PC-9 (cell line): ENCODE measurements at regions of chr5 and their contacts with region 1.

Region 1: GRCh38 chr5:149960272-149961185 is at the start of gene SLC26A2:
- DNase-seq: peak; percentile 93 to 99
- H3K4me3 ChIP-seq: peak within 1 kb of the TSS; percentile 75
- H3K27ac ChIP-seq: peak within 1 kb of the TSS; percentile 80
- H3K4me1 ChIP-seq: peaks cover 13% of the 10 kb centered on the region
- H3K27me3 ChIP-seq: no peaks in the 10 kb centered on the region
- CTCF ChIP-seq: no peak
- total RNA-seq, gene SLC26A2: 10.2 and 13.5 TPM in 2 replicates

Region 2: DNA sequence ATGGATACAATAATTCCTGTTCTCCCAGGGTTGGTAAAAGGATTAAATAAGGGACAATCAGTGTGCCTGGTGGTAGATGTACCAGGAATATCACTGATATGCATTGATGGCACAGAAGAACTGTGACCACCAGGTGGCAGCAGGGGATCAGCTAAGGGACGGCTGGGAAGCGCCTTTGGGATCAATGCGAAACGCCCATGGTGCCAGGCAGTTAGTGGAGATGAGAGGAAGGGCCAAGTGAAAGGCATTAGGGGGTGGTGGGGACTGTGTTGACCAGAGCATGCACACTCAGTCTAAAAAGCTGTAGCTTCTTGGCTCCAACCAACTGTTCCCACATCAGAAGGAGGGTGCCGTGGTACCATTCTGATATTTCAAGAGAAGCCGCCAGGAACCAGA is 323.7 kb before region 1 on chr5:
- CTCF ChIA-PET with region 1: interaction called, 3 read pairs
- POLR2A ChIA-PET with region 1: interaction called, 4 read pairs
- intact Hi-C with region 1: loop called (anchors 10 kb)
- DNase-seq: peak in 1 of 2 experiments; percentile 35
- H3K4me3 ChIP-seq: no peak overlapping the region
- H3K27ac ChIP-seq: no peak overlapping the region
- H3K4me1 ChIP-seq: peaks cover 21% of the 10 kb centered on the region
- H3K27me3 ChIP-seq: no peaks in the 10 kb centered on the region
- CTCF ChIP-seq: peak; percentile 88

Region 3: GRCh38 chr5:149697001-149697400 is 263.5 kb before region 1 on chr5:
- CTCF ChIA-PET with region 1: no interaction called
- POLR2A ChIA-PET with region 1: no interaction called
- intact Hi-C with region 1: no loop called
- DNase-seq: peak in 1 of 2 experiments; percentile 75
- H3K4me3 ChIP-seq: no peak overlapping the region
- H3K27ac ChIP-seq: no peak overlapping the region
- H3K4me1 ChIP-seq: peaks cover 11% of the 10 kb centered on the region
- H3K27me3 ChIP-seq: peaks cover 26% of the 10 kb centered on the region
- CTCF ChIP-seq: no peak

Region 4: DNA sequence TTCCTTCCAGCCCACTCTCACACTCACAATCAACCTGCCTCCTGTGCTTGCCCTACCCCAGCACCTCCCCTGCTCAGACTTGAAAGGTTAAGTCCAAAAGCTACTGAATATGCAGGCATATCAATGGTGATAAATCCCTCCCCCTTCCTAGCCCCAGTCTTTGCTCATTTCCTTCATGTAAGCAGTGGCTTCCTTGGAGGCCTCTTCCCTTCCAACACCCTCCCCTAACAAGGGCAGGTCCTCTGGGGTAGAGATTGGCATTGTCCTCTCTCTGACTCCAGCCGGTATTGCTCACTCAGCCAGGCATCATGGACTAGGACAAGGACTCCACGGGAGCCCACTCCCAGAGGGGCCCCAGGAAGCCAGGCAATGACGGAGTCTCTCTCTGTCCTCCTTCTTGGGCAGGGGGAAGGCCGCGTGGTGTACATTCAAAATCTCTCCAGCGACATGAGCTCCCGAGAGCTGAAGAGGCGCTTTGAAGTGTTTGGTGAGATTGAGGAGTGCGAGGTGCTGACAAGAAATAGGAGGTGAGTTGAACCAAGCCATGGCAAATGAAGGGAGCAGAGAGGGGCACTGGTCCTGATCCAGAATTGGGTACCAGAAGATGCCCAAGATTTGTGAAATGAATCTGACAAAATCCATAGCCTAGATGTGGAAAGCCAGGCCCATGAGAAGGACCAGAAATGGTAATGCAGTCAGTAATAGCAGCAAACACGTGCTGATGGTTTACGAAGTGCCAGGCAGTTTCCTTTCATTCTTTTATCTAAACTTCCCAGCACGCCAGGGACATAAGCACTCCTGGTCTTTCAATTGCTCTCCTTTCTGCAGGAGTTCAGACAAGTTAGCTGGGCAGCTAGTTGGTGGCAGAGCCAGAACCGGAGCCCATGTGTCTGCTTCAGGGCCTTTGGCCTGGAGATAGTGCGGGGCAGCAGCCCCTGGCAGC is 118.4 kb before region 1 on chr5:
- CTCF ChIA-PET with region 1: interaction called, 27 read pairs
- POLR2A ChIA-PET with region 1: interaction called, 13 read pairs
- intact Hi-C with region 1: loop called (anchors 1 kb)
- DNase-seq: no peak
- H3K4me3 ChIP-seq: no peak overlapping the region
- H3K27ac ChIP-seq: no peak overlapping the region
- H3K4me1 ChIP-seq: peaks cover 10% of the 10 kb centered on the region
- H3K27me3 ChIP-seq: no peaks in the 10 kb centered on the region
- CTCF ChIP-seq: no peak

Region 5: GRCh38 chr5:149860801-149861322 is 99.7 kb before region 1 on chr5:
- CTCF ChIA-PET with region 1: interaction called, 4 read pairs
- POLR2A ChIA-PET with region 1: interaction called, 30 read pairs
- intact Hi-C with region 1: no loop called
- DNase-seq: no peak
- H3K4me3 ChIP-seq: no peak overlapping the region
- H3K27ac ChIP-seq: no peak overlapping the region
- H3K4me1 ChIP-seq: no peaks in the 10 kb centered on the region
- H3K27me3 ChIP-seq: no peaks in the 10 kb centered on the region
- CTCF ChIP-seq: no peak

Region 6: DNA sequence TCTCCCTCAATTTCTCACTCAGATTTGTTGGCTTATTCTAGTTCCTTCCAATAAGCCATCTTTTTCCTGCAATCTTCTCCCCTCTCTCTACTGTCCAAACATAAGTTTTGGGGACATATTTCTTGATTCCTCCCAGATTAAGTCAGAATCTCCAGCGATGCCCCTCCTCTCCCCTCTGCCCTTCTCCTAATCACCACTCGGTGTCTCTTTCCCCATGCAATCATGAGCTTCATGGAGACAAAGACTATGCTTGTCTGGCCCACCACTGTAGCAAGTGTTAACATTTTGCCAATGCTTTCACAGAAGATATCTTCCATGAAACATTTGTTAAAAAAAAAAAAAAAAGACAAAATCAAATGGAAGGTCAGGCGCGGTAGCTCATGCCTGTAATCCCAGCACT is 58.4 kb before region 1 on chr5:
- CTCF ChIA-PET with region 1: interaction called, 12 read pairs
- POLR2A ChIA-PET with region 1: no interaction called
- intact Hi-C with region 1: loop called (anchors 5 kb)
- DNase-seq: no peak
- H3K4me3 ChIP-seq: no peak overlapping the region
- H3K27ac ChIP-seq: no peak overlapping the region
- H3K4me1 ChIP-seq: no peaks in the 10 kb centered on the region
- H3K27me3 ChIP-seq: no peaks in the 10 kb centered on the region
- CTCF ChIP-seq: no peak

Region 7: GRCh38 chr5:149938791-149939358 is 21.7 kb before region 1 on chr5:
- CTCF ChIA-PET with region 1: interaction called, 5 read pairs
- POLR2A ChIA-PET with region 1: interaction called, 15 read pairs
- intact Hi-C with region 1: loop called (anchors 1 kb)
- DNase-seq: peak; percentile 90 to 98
- H3K4me3 ChIP-seq: peak overlapping the region; percentile 38; the same call in 1 of the 2 replicates
- H3K27ac ChIP-seq: peak overlapping the region; percentile 99
- H3K4me1 ChIP-seq: peaks cover 59% of the 10 kb centered on the region
- H3K27me3 ChIP-seq: no peaks in the 10 kb centered on the region
- CTCF ChIP-seq: no peak

Region 8: DNA sequence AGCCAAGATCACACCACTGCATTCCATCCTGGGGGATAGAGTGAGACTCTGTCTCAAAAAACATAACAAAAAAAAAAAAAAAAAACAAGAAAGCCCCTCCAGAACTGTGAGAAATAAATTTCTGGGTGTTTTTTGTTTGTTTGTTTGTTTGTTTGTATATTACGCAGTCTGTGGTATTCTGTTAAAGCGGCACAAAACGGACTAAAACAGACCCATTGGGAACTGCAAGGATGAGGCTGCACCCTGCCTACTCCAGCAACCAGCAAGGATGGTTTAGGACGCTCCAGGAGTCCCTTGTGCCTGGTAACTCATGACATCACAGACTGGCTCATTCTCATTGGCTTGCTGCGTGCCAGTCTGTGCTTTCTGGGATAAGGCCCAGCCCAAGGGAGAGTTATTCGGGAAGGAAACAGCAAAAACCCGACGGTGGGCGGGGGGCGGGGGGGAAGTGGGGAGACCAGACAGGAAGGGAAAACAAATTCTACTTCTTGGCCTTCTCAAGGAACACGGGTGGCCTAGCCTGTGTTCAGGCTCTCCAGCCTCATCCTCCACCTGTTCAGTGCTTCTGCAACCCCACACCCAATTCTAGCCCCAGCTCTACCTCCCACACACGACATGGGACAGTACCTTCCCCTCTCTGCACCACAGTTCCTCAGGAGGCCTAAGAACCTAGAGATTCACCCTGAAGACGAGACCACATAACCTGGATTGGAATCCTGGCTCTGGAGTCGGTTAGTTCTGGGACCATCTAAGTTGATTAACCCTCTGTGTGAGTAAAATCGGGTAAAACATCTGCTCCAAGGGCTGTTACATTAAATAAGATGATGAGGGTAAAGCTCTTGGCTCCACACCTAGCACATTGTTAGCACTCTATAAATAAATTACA is 449.4 kb after region 1 on chr5:
- CTCF ChIA-PET with region 1: interaction called, 10 read pairs
- POLR2A ChIA-PET with region 1: no interaction called
- intact Hi-C with region 1: no loop called
- DNase-seq: peak; percentile 75 to 76
- H3K4me3 ChIP-seq: peak overlapping the region; percentile 14; the same call in 1 of the 2 replicates
- H3K27ac ChIP-seq: no peak overlapping the region
- H3K4me1 ChIP-seq: peaks cover 6% of the 10 kb centered on the region
- H3K27me3 ChIP-seq: no peaks in the 10 kb centered on the region
- CTCF ChIP-seq: no peak